Naive thymus-derived CD4-positive, alpha-beta T cell (primary cell): ENCODE measurements at regions of chr2 and their contacts with region 1.

Region 1: DNA sequence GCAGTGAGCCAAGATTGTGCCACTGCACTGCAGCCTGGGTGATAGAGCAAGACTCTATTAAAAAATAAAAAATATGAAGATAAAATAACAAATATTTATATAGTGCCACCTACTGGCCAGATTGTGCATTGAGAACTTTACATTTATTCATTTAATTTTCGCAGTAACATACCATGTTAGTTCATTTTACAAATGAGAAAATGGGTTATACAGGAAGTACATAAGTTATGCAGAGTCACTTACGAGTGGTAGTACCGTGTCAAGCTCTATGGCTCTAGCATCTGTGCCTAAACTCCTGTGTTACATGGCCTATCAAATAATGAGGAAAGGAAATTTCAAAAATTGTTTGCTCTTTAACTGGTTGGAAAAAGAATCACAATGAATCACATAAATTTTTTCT is 27.9 kb downstream of the RIF1 start:
- DNase-seq: peak in 5 of 9 donors; percentile 24 to 40 (median 32)
- ATAC-seq: peak; percentile 74
- H3K4me3 ChIP-seq: no peak overlapping the region
- H3K4me3 Mint-ChIP-seq: no peak overlapping the region
- H3K27ac ChIP-seq: no peak overlapping the region
- H3K27ac Mint-ChIP-seq: peak overlapping the region in 8 of 9 donors; percentile 30 to 81 (median 60)
- H3K4me1 ChIP-seq: no peaks in the 10 kb centered on the region
- H3K4me1 Mint-ChIP-seq: peaks cover 6 to 14% (median 12%) of the 10 kb centered on the region in 7 donors
- H3K27me3 ChIP-seq: no peaks in the 10 kb centered on the region
- H3K27me3 Mint-ChIP-seq: no peaks in the 10 kb centered on the region

Region 2: GRCh38 chr2:150924878-150925277 is 512.8 kb before region 1 on chr2:
- CTCF ChIA-PET with region 1: no interaction called
- POLR2A ChIA-PET with region 1: no interaction called
- intact Hi-C with region 1: no loop called
- DNase-seq: no peak
- ATAC-seq: no peak
- H3K4me3 ChIP-seq: no peak overlapping the region
- H3K4me3 Mint-ChIP-seq: no peak overlapping the region
- H3K27ac ChIP-seq: no peak overlapping the region
- H3K27ac Mint-ChIP-seq: no peak overlapping the region
- H3K4me1 ChIP-seq: no peaks in the 10 kb centered on the region
- H3K4me1 Mint-ChIP-seq: no peaks in the 10 kb centered on the region
- H3K27me3 ChIP-seq: no peaks in the 10 kb centered on the region
- H3K27me3 Mint-ChIP-seq: peaks cover 0 to 9% (median 6%) of the 10 kb centered on the region in 5 donors

Region 3: DNA sequence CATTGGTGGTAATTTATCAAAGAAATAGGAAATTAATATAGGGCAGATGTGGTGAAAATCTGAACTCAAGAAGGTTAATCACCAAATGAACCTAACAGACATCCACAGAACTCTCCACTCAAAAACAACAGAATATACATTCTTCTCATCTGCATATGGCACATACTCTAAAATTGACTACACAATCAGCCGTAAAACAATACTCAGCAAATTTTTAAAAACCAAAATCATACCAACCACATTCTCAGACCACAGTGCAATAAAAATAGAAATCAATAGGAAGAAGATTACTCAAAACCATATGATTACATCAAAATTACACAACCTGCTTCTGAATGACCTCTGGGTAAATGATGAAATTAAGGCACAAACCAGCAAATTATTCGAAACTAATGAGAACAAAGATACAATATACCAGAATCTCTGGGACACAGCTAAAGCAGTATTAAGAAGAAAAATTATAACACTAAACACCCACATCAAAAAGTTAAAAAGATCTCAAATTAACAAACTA is 206.9 kb before region 1 on chr2:
- CTCF ChIA-PET with region 1: no interaction called
- POLR2A ChIA-PET with region 1: no interaction called
- intact Hi-C with region 1: no loop called
- DNase-seq: no peak
- ATAC-seq: no peak
- H3K4me3 ChIP-seq: no peak overlapping the region
- H3K4me3 Mint-ChIP-seq: no peak overlapping the region
- H3K27ac ChIP-seq: no peak overlapping the region
- H3K27ac Mint-ChIP-seq: no peak overlapping the region
- H3K4me1 ChIP-seq: no peaks in the 10 kb centered on the region
- H3K4me1 Mint-ChIP-seq: peaks cover 0 to 1% (median 0%) of the 10 kb centered on the region in 7 donors
- H3K27me3 ChIP-seq: no peaks in the 10 kb centered on the region
- H3K27me3 Mint-ChIP-seq: peaks cover 0 to 45% (median 15%) of the 10 kb centered on the region in 5 donors

Region 4: DNA sequence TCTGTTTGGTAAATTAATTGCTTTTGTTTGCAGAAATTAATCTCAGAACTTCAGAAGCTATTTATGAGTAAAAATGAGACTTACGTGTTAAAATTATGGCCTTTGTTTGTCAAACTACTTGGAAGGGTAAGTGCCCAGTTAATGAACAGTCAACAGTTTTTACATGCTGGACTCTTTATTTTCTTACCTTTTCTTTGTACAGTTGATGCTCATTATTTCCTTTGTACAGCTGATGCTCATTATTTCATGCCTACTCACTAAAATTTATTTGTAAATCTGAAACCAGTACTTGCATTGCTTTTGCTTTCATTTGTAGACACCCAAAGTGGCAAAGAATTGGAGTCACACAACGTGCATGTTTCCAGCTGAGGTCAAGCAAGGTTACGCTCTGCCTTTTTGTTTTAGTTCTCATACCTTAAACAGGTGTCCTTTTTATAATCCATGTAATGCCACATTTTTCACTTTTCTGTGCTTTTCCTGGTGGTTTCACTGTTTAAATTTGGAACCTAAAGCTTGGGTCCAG is 14.7 kb before region 1 on chr2:
- CTCF ChIA-PET with region 1: interaction called, 4 read pairs
- POLR2A ChIA-PET with region 1: no interaction called
- intact Hi-C with region 1: loop called in 1 of 2 experiments (anchors 2 kb)
- DNase-seq: no peak
- ATAC-seq: no peak
- H3K4me3 ChIP-seq: no peak overlapping the region
- H3K4me3 Mint-ChIP-seq: peak overlapping the region in 5 of 10 donors; percentile 45 to 63 (median 59)
- H3K27ac ChIP-seq: peak overlapping the region; percentile 53
- H3K27ac Mint-ChIP-seq: peak overlapping the region; percentile 51 to 98 (median 91)
- H3K4me1 ChIP-seq: peaks cover 17 to 20% of the 10 kb centered on the region in 2 donors
- H3K4me1 Mint-ChIP-seq: peaks cover 14 to 49% (median 44%) of the 10 kb centered on the region in 7 donors
- H3K27me3 ChIP-seq: no peaks in the 10 kb centered on the region
- H3K27me3 Mint-ChIP-seq: no peaks in the 10 kb centered on the region